Heart right ventricle (tissue), 16 donors: ENCODE measurements at regions of chr2 and their contacts with region 1.

Region 1: DNA sequence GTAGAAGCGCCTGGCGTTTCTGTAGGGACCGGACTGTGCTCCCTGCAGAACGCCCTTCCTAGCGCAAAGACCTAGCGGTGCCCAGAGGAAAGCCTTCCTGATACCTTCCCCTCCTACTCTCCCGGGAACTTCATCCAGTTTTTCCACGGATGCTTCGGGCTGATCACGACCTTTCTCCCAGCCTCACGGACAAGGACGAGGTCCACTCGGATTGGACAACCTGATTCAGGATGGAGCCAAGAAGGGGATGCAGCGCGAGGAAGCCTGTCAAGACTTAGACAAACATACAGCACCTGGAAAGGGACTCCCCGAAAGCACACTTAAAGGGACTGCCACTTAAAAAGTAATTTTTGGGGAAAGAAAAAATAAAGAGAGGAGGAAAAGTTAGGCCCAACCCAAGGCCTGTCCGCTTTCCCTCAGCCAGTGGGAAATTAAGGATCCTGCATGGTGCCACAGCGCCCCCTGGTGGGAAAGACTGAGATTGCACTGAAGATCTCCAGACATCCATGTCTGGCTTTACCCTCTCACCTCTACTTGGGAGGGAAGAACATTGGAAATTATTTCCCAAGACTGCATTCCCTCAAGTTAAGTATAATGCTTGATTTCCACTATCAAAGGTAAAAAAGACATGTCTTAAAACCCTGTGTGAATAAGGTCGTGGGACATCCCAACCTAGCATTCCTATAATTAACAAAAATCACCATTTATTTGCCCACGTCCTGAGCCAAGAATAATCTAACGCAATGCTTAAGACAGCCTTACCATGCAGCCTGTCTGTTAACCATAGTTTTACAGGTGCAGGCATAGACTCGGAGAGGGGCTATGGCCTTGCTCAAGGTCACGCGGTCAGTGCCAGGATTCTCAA is 13.4 kb upstream of the COPS8 start:
- DNase-seq: peak; percentile 66 to 67
- ATAC-seq: peak in 7 of 8 donors; percentile 50 to 80 (median 67)
- H3K4me3 ChIP-seq: no peak overlapping the region
- H3K27ac ChIP-seq: no peak overlapping the region
- H3K4me1 ChIP-seq: peaks cover 5 to 41% (median 31%) of the 10 kb centered on the region in 9 donors
- H3K27me3 ChIP-seq: no peaks in the 10 kb centered on the region
- CTCF ChIP-seq: peak; percentile 92 to 99 (median 98)

Region 2: GRCh38 chr2:235766278-235766677 is 1306.0 kb before region 1 on chr2:
- intact Hi-C with region 1: loop called in 3 of 10 experiments (anchors 5 to 10 kb)
- DNase-seq: peak in 1 of 2 donors; percentile 83
- ATAC-seq: peak; percentile 86 to 94 (median 88)
- H3K4me3 ChIP-seq: no peak overlapping the region
- H3K27ac ChIP-seq: no peak overlapping the region
- H3K4me1 ChIP-seq: peaks cover 0 to 5% (median 0%) of the 10 kb centered on the region in 9 donors
- H3K27me3 ChIP-seq: no peaks in the 10 kb centered on the region
- CTCF ChIP-seq: peak; percentile 85 to 97 (median 93)

Region 3: DNA sequence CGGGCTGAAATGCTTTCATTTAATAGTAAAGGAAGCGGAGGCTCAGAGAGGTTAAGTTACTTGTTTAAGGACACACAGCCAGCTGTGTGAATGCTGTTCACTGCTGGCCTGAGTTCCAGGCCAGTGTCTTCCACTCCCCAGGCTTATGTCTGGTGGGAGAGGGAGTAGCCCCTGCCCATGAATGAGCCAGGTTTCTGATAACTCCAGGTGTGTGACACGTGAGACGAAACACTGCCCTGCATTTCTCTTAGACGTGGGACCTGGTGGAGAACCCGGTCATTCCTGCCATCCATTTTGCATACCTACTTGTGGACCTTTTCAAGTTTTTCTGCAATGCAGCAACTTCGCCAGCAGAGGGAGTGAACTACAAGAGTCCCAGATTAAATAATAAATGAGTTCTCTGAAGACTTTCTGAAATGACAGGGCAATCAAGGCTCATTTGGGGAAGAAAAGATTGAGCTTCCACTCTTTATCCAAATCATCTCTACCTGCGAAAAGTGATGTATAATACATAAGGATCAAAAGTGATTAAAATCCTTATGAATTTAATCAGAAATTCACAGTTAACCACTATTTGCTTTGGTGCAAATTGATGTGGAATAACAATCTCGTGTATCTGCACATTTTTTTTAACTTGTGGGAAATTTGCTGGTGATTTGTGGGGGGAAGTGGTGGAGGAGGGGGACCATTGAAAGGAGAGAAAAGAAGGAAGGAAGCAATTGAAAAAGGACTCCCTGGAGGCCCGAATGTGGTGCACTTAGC is 728.7 kb before region 1 on chr2:
- intact Hi-C with region 1: loop called in 2 of 10 experiments (anchors 5 kb)
- DNase-seq: peak in 1 of 2 donors; percentile 51
- ATAC-seq: peak in 1 of 8 donors; percentile 21
- H3K4me3 ChIP-seq: no peak overlapping the region
- H3K27ac ChIP-seq: peak overlapping the region in 1 of 10 donors; percentile 76
- H3K4me1 ChIP-seq: peaks cover 0 to 50% (median 10%) of the 10 kb centered on the region in 9 donors
- H3K27me3 ChIP-seq: no peaks in the 10 kb centered on the region
- CTCF ChIP-seq: peak; percentile 73 to 91 (median 83)

Region 4: GRCh38 chr2:236939721-236940231 is 132.5 kb before region 1 on chr2:
- intact Hi-C with region 1: no loop called
- DNase-seq: no peak
- ATAC-seq: no peak
- H3K4me3 ChIP-seq: no peak overlapping the region
- H3K27ac ChIP-seq: no peak overlapping the region
- H3K4me1 ChIP-seq: no peaks in the 10 kb centered on the region
- H3K27me3 ChIP-seq: peaks cover 0 to 4% (median 0%) of the 10 kb centered on the region in 7 donors
- CTCF ChIP-seq: no peak